ENCODE measurements at regions of chr6 and their contacts with region 1.

Region 1: DNA sequence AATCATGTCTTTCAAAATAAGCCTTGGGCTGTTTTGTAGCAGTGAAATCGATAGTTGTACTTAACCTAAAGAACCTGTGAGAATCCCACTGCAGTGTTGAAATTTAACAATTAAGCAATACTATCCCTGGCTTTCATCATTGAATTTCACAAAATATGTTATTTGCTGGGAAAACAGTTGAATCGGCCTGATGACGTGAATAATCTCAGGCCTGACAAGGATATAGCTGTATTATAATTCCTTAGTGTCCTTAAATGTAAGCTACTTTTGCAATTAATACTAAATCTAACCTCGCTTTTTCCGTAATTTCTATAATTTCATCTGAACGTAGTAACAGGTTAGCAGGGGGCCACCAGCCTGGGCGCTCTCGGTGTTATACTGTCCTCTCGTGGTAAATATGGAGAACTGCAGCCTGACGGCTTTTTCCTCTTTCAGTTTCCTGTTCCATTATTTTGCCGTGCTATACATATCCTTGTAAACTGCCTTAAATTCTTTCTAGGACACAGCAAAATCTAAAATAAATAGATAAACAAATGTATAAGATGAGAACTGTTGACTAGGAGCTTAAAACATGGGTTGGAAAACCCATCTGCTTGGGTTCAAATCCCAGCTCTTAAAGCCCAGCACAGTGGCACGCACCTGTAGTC is 24.0 kb downstream of the MTFR2 start:
- DNase-seq: peak; percentile 29
- H3K4me3 ChIP-seq: no peak overlapping the region
- H3K27ac ChIP-seq: no peak overlapping the region
- H3K27me3 ChIP-seq: no peaks in the 10 kb centered on the region
- CTCF ChIP-seq: peak; percentile 100

Region 2: GRCh38 chr6:135497412-135498269 is 728.5 kb before region 1 on chr6 and contains the start of gene AHI1:
- CTCF ChIA-PET with region 1: interaction called, 14 read pairs
- POLR2A ChIA-PET with region 1: no interaction called
- DNase-seq: peak; percentile 81
- H3K4me3 ChIP-seq: peak within 1 kb of the TSS; percentile 83
- H3K27ac ChIP-seq: peak within 1 kb of the TSS; percentile 99
- H3K27me3 ChIP-seq: no peaks in the 10 kb centered on the region
- CTCF ChIP-seq: no peak
- polyA plus RNA-seq, gene AHI1: 18.5 and 29.0 TPM in 2 replicates

Region 3: DNA sequence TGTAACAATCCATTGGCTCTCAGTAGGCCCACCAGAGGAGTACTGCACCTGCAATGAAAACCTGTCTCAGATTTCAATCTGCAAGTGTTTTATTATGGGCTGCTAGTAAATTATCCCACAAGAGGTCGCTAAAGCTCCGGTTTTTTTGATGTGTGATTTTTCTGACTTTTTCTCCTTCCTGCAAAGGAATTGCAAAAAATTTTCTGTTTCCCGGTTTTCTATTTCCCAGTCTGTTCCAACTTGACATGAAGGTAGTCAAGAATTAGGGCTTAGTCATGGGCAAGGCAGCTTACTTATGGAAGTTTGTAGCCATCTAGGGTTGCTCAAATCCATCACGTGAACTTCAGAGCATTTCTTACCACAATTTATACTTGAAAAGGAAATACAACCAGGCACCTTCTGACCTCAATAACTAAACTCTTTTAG is 690.1 kb before region 1 on chr6:
- CTCF ChIA-PET with region 1: interaction called, 44 read pairs
- POLR2A ChIA-PET with region 1: no interaction called
- DNase-seq: peak; percentile 94
- H3K4me3 ChIP-seq: no peak overlapping the region
- H3K27ac ChIP-seq: no peak overlapping the region
- H3K27me3 ChIP-seq: no peaks in the 10 kb centered on the region
- CTCF ChIP-seq: peak; percentile 68

Region 4: DNA sequence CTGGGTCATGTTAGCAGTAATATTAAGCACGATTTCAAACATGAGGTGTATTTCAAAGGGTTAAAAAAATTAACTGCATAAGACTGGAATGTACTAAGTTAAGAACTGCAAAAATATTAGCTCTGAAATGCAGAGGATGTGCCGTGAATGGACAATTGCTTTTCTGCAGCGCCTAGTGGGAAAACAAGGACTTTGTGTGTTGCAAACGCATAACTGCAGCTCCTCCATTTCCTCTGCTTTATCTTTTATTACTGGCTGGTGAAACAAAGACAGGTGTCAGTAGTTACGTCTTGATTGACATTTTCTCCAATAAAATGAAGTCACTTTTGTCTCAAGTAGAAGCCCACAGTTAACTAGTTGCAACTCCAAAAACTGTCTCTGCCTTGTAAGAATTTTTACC is 372.9 kb before region 1 on chr6:
- CTCF ChIA-PET with region 1: interaction called, 10 read pairs
- POLR2A ChIA-PET with region 1: no interaction called
- DNase-seq: no peak
- H3K4me3 ChIP-seq: peak overlapping the region; percentile 68
- H3K27ac ChIP-seq: no peak overlapping the region
- H3K27me3 ChIP-seq: no peaks in the 10 kb centered on the region
- CTCF ChIP-seq: peak; percentile 25; the same call in 1 of the 2 replicates

Region 5: GRCh38 chr6:135938576-135939207 is 287.5 kb before region 1 on chr6:
- CTCF ChIA-PET with region 1: interaction called, 17 read pairs
- POLR2A ChIA-PET with region 1: no interaction called
- DNase-seq: no peak
- H3K4me3 ChIP-seq: no peak overlapping the region
- H3K27ac ChIP-seq: no peak overlapping the region
- H3K27me3 ChIP-seq: no peaks in the 10 kb centered on the region
- CTCF ChIP-seq: peak; percentile 46

Region 6: GRCh38 chr6:136213012-136213539 is 13.1 kb before region 1 on chr6:
- CTCF ChIA-PET with region 1: interaction called, 14 read pairs
- POLR2A ChIA-PET with region 1: no interaction called
- DNase-seq: no peak
- H3K4me3 ChIP-seq: no peak overlapping the region
- H3K27ac ChIP-seq: no peak overlapping the region
- H3K27me3 ChIP-seq: no peaks in the 10 kb centered on the region
- CTCF ChIP-seq: no peak